ENCODE measurements at regions of chr11 and their contacts with region 1.

Region 1: GRCh38 chr11:133834682-133835592 is 10.4 kb downstream of the SPATA19 start:
- DNase-seq: peak; percentile 59
- H3K4me3 ChIP-seq: no peak overlapping the region
- H3K27ac ChIP-seq: no peak overlapping the region
- H3K4me1 ChIP-seq: no peaks in the 10 kb centered on the region
- H3K27me3 ChIP-seq: no peaks in the 10 kb centered on the region
- CTCF ChIP-seq: peak; percentile 49

Region 2: DNA sequence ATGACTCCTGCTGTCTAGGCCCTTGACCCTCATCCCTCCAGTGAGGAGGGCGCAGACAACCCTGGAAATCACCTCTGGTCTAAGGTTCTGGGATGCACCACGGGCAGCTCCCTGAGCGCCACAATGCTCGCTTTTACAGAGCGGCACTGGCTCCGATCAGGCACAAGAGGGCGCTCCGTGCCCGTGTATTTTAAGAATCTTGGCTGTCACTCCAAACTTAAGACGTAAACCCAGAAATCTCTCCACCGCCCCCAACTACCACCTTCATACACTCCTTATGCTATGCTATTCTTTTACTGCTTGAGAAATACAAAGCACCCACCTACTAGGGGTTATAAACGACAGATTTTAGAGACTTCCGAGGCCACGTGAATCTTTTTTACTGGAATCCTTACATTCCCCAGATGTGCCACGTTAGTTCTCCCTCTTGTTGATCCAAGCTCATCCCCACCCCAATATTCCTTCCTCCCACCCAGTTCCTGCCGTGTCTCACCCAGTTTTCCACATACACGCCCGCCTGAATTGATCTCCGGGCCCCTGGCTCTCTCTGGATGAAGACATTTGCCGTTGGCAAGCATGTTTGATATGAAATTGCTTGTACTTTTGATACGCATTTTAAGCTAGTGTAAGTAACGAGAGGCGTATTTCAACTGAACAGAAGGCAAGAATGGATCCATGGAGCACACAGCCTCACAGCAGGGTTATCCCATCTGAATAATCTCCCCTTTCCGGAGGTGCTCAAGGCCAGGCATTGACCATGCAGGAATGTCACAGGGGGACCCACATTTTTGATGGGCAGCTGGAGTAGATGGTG is 756.1 kb before region 1 on chr11:
- CTCF ChIA-PET with region 1: interaction called, 3 read pairs
- POLR2A ChIA-PET with region 1: no interaction called
- intact Hi-C with region 1: loop called (anchors 1 kb)
- DNase-seq: peak; percentile 71
- H3K4me3 ChIP-seq: no peak overlapping the region
- H3K27ac ChIP-seq: no peak overlapping the region
- H3K4me1 ChIP-seq: no peaks in the 10 kb centered on the region
- H3K27me3 ChIP-seq: peaks cover 45% of the 10 kb centered on the region
- CTCF ChIP-seq: peak; percentile 94

Region 3: GRCh38 chr11:133134314-133135173 is 700.4 kb before region 1 on chr11:
- CTCF ChIA-PET with region 1: interaction called, 5 read pairs
- POLR2A ChIA-PET with region 1: no interaction called
- intact Hi-C with region 1: loop called (anchors 1 kb)
- DNase-seq: peak; percentile 62
- H3K4me3 ChIP-seq: no peak overlapping the region
- H3K27ac ChIP-seq: no peak overlapping the region
- H3K4me1 ChIP-seq: no peaks in the 10 kb centered on the region
- H3K27me3 ChIP-seq: peaks cover 2% of the 10 kb centered on the region
- CTCF ChIP-seq: peak; percentile 87

Measured in A673 (cell line).